ENCODE measurements at regions of chr15 and their contacts with region 1.

Region 1: GRCh38 chr15:72231066-72231846 is at the start of gene PKM:
- DNase-seq: peak; percentile 99
- H3K4me3 ChIP-seq: peak within 1 kb of the TSS; percentile 83
- H3K4me3 Mint-ChIP-seq: peak within 1 kb of the TSS; percentile 97
- H3K27ac Mint-ChIP-seq: peak within 1 kb of the TSS; percentile 95
- H3K4me1 ChIP-seq: peaks cover 30% of the 10 kb centered on the region
- H3K4me1 Mint-ChIP-seq: no peaks in the 10 kb centered on the region
- H3K27me3 ChIP-seq: no peaks in the 10 kb centered on the region
- H3K27me3 Mint-ChIP-seq: no peaks in the 10 kb centered on the region
- CTCF ChIP-seq: no peak
- total RNA-seq, gene PKM: 733 and 791 TPM in 2 replicates

Region 2: DNA sequence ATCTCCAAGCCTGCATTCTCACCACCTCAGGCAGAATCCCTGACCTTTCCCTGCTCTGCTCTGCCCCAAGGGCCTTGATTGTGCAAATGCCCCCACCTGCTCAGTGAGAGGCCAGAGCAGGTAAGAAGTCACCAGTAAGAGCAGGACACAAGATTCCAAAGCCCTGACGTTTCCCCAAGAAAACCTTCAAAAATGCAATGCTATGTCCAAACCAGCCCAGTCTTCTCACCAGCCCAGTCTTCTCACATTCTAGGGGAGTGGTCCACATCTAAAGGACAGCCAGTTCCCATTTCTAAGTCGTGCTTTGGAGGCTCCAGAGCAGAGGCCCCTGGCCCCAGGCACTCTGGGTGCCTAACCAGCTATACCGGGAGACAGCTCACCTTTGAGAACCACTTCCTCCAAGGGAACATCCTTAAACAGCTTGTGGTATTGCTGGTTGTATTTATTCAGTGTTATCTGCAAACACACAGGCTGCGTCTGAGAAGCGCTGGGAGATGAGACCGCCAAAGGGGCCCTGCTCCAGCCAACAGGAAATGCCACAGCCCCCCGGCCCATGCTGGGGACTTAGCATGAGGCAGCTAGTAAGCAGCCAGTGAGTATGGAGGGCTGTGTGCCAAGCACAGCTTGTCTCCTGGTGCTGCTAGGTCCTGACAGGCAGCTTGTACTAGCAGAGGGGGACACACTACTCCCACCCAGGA is 63.0 kb before region 1 on chr15:
- CTCF ChIA-PET with region 1: no interaction called
- POLR2A ChIA-PET with region 1: no interaction called
- intact Hi-C with region 1: no loop called
- DNase-seq: peak; percentile 64 to 73
- H3K4me3 ChIP-seq: no peak overlapping the region
- H3K4me3 Mint-ChIP-seq: peak overlapping the region; percentile 42
- H3K27ac Mint-ChIP-seq: peak overlapping the region; percentile 81
- H3K4me1 ChIP-seq: peaks cover 40% of the 10 kb centered on the region
- H3K4me1 Mint-ChIP-seq: peaks cover 8% of the 10 kb centered on the region
- H3K27me3 ChIP-seq: no peaks in the 10 kb centered on the region
- H3K27me3 Mint-ChIP-seq: no peaks in the 10 kb centered on the region
- CTCF ChIP-seq: no peak

Region 3: DNA sequence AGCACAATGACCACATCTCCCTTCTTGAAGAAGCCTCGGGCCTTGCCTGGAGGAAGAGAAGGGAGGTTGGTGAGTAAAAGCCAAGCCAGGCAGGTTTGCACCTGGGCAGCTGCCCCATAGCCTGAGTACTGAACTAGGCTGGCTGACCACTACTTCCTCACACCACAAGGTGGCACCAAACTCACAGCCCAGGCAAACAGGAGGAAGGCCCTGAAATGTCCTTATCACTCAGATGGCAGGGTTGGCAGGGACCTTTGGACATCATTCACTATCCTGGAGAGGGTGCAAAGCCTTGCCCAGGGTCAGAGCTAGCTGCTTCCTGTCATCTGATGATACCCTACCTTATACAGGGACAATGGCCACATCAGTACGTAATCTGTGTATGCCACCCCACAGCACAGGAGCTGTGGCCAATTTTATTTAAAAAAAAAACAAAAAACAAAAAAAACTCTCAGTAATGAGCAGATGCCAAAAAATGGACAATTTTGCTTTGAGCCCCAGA is 31.5 kb before region 1 on chr15:
- CTCF ChIA-PET with region 1: interaction called, 8 read pairs
- POLR2A ChIA-PET with region 1: interaction called, 3 read pairs
- intact Hi-C with region 1: loop called (anchors 1 kb)
- DNase-seq: peak; percentile 78 to 81
- H3K4me3 ChIP-seq: no peak overlapping the region
- H3K4me3 Mint-ChIP-seq: no peak overlapping the region
- H3K27ac Mint-ChIP-seq: no peak overlapping the region
- H3K4me1 ChIP-seq: peaks cover 12% of the 10 kb centered on the region; the same call in 1 of the 2 replicates
- H3K4me1 Mint-ChIP-seq: no peaks in the 10 kb centered on the region
- H3K27me3 ChIP-seq: no peaks in the 10 kb centered on the region
- H3K27me3 Mint-ChIP-seq: peaks cover 2% of the 10 kb centered on the region
- CTCF ChIP-seq: peak; percentile 86 to 90

Region 4: DNA sequence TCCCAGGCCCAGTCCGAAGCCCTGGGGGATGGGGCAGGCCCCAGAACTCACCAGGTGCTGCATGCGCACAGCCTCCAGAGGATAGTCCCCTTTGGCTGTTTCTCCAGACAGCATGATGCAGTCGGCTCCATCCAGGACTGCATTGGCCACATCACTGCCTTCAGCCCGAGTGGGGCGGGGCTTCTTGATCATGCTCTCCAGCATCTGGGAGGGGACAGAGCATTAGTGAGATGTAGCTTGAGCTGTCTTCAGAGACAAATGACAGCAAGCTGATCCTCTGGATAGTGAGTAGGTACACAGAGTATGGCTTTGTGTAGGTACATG is 24.6 kb before region 1 on chr15:
- CTCF ChIA-PET with region 1: interaction called, 8 read pairs
- POLR2A ChIA-PET with region 1: interaction called, 11 read pairs
- intact Hi-C with region 1: loop called (anchors 2 kb)
- DNase-seq: no peak
- H3K4me3 ChIP-seq: no peak overlapping the region
- H3K4me3 Mint-ChIP-seq: no peak overlapping the region
- H3K27ac Mint-ChIP-seq: no peak overlapping the region
- H3K4me1 ChIP-seq: no peaks in the 10 kb centered on the region
- H3K4me1 Mint-ChIP-seq: no peaks in the 10 kb centered on the region
- H3K27me3 ChIP-seq: no peaks in the 10 kb centered on the region
- H3K27me3 Mint-ChIP-seq: no peaks in the 10 kb centered on the region
- CTCF ChIP-seq: no peak

Region 5: DNA sequence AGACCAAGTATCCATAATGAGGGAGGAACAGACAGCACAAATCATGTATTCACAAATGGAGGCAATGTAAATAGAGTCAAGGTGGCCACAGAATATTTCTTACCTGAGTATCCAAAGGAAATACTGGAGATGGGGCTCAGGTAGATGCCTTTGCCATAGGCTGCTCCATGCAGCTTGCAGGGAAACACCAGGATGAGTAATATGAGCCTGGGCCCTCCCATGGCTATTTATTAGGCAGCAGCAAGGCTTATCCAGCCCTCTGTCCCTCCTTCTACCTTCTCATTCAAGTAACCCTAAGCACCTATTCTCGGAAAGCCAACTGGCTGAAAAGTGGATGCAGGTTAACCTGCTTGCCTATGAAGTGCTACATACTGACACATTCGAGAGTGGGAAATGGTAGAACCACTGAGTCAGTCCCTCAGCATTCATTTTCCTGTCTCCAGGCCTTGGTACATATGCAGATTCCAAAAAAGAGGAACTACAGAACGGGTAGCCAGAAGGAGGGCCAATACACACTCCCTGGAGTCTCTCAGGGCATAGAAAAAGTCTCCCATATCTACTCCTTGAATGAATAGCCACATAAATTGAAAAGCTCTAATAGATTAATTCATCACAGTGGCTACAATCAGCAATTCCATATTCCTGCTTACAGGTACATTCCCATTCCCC is 18.0 kb after region 1 on chr15:
- CTCF ChIA-PET with region 1: no interaction called
- POLR2A ChIA-PET with region 1: no interaction called
- intact Hi-C with region 1: no loop called
- DNase-seq: no peak
- H3K4me3 ChIP-seq: no peak overlapping the region
- H3K4me3 Mint-ChIP-seq: no peak overlapping the region
- H3K27ac Mint-ChIP-seq: no peak overlapping the region
- H3K4me1 ChIP-seq: no peaks in the 10 kb centered on the region
- H3K4me1 Mint-ChIP-seq: no peaks in the 10 kb centered on the region
- H3K27me3 ChIP-seq: no peaks in the 10 kb centered on the region
- H3K27me3 Mint-ChIP-seq: no peaks in the 10 kb centered on the region
- CTCF ChIP-seq: no peak

Region 6: DNA sequence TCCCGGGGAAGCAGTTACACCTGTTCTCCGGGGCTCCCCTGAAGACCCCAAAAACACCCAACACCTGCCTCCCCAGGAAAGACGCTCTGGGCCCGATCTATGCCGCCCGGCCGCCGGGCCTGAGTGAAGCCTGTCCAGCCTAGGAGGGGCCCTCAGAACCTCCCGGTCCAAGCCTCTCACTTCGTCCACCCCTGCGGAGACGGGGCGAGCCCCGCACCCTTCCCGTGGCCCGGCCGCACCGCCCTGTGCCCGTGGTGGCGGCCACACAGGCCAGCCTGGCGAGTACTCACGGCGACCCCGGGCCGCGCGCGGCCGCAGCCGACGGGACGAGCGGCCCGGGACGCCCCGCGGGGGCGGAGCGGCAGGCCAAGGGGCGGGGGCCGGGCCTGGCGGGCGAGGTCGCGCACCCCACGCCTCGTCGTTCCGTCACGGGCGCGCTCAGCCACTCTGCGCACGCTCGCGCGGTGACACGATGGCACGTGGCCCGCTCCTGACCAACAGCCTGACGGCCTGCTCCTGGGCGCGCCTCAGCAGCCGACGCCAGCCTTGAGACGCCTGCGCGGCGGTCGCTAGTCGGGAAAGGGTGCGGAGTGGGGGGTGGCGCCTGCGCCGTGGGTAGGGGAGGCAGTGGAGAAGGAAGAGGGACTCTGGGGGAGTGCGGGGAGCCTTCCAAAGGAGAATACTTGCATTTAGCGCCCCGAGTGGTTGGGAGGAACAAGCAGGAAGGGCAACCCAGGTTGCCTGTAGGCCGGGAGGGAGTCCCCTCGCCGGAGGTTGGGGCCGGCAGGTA is 41.2 kb after region 1 on chr15 and contains the start of gene PARP6:
- CTCF ChIA-PET with region 1: no interaction called
- POLR2A ChIA-PET with region 1: no interaction called
- intact Hi-C with region 1: loop called (anchors 1 kb)
- DNase-seq: peak; percentile 99
- H3K4me3 ChIP-seq: peak within 1 kb of the TSS; percentile 96
- H3K4me3 Mint-ChIP-seq: peak within 1 kb of the TSS; percentile 83
- H3K27ac Mint-ChIP-seq: peak within 1 kb of the TSS; percentile 78
- H3K4me1 ChIP-seq: peaks cover 4% of the 10 kb centered on the region
- H3K4me1 Mint-ChIP-seq: peaks cover 8% of the 10 kb centered on the region
- H3K27me3 ChIP-seq: no peaks in the 10 kb centered on the region
- H3K27me3 Mint-ChIP-seq: no peaks in the 10 kb centered on the region
- CTCF ChIP-seq: peak; percentile 46 to 75
- total RNA-seq, gene PARP6: 62.2 and 64.6 TPM in 2 replicates

Region 7: GRCh38 chr15:72404841-72405240 is 173.6 kb after region 1 on chr15:
- CTCF ChIA-PET with region 1: no interaction called
- POLR2A ChIA-PET with region 1: no interaction called
- intact Hi-C with region 1: no loop called
- DNase-seq: no peak
- H3K4me3 ChIP-seq: no peak overlapping the region
- H3K4me3 Mint-ChIP-seq: no peak overlapping the region
- H3K27ac Mint-ChIP-seq: no peak overlapping the region
- H3K4me1 ChIP-seq: no peaks in the 10 kb centered on the region
- H3K4me1 Mint-ChIP-seq: no peaks in the 10 kb centered on the region
- H3K27me3 ChIP-seq: no peaks in the 10 kb centered on the region
- H3K27me3 Mint-ChIP-seq: peaks cover 16% of the 10 kb centered on the region
- CTCF ChIP-seq: no peak

Region 8: DNA sequence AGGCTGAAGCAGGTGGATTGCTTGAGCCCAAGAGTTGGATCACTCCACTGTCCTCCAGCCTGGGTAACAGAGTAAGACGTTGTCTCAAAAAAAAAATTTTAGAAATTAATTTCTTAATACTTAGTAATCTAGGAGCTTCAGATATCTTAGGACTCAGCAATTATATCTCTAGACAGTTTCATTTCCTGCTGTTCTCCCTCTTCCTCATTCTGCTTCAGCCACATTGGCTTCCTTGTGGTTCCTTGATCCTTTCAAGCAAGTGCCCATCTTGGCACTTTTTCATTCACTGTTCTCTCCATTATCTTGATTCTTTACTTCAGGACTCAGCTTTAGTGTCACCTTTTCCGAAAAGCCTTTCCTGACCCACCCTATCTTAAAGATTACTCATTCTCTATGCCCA is 189.3 kb after region 1 on chr15:
- CTCF ChIA-PET with region 1: no interaction called
- POLR2A ChIA-PET with region 1: no interaction called
- intact Hi-C with region 1: no loop called
- DNase-seq: no peak
- H3K4me3 ChIP-seq: no peak overlapping the region
- H3K4me3 Mint-ChIP-seq: no peak overlapping the region
- H3K27ac Mint-ChIP-seq: no peak overlapping the region
- H3K4me1 ChIP-seq: no peaks in the 10 kb centered on the region
- H3K4me1 Mint-ChIP-seq: no peaks in the 10 kb centered on the region
- H3K27me3 ChIP-seq: no peaks in the 10 kb centered on the region
- H3K27me3 Mint-ChIP-seq: no peaks in the 10 kb centered on the region
- CTCF ChIP-seq: no peak

Measured in Caco-2 (cell line).